ENCODE measurements at regions of chr16 and their contacts with region 1.

Region 1: DNA sequence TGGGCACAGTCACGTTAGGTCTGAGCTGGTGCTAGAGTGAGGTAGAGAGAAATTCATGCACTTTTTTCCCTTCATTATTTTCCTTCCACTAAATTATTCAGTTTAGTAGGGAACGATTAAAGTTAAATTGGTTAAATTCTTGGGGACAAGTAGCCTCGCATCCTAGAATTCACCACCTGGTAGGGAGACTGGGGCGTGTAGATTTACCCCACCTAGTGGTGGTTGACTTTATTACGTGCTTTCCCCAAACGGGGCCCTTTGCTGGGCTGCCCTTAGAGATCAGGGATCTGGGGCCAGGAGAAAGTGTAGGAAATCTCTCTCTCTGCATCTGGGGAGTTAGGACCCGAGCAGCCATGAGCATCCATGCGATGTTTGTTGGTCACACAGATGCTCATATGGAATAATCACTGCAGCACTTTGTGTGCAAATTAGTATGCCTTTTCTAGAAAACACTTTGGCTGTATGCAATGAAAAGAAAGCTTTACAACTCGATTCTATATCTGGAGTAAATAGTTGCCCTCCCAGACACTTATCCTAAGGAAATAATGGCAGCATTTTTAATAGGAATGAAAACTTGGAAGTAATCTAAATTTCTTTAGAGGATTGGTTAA is 107.0 kb downstream of the PLCG2 start:
- DNase-seq: peak; percentile 31
- ATAC-seq: peak; percentile 80
- H3K4me3 ChIP-seq: no peak overlapping the region
- H3K27ac ChIP-seq: no peak overlapping the region
- H3K4me1 ChIP-seq: peaks cover 34% of the 10 kb centered on the region
- H3K27me3 ChIP-seq: peaks cover 9 to 17% of the 10 kb centered on the region in 2 experiments; a peak in 2 of 5 replicates
- CTCF ChIP-seq: peak; percentile 68
- EP300 ChIP-seq: no peak
- POLR2A ChIP-seq: no peak
- RAD21 ChIP-seq: no peak

Region 2: DNA sequence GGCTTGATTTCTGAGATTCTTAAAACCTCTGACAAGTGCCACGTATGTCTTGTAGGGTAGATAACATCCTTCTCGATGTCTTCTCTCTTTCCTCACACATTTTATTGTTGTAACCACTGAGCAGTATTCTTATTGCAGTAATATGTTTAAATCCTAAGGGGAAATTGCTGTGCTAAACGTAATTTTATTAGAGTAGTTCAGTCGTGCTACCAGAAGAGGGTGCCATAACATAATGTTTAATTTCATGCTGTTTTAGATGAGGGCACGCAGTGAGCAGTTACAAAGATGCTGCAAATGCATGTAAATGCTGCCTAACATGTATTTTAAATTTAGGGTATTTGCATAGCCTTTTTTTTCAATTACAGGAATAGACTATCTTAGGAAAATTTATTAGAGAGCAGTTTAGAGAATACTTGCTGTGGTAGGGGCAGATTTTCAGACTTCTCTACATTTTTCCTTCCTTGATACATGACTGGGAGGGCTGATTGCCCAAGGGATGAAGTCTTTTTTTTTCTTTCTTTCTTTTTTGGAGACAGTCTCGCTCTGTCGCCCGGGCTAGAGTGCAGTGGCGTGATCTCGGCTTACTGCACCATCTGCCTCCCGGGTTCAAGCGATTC is 519.7 kb before region 1 on chr16:
- CTCF ChIA-PET with region 1: no interaction called
- POLR2A ChIA-PET with region 1: no interaction called
- in situ Hi-C with region 1: no loop called
- intact Hi-C with region 1: loop called (anchors 5 kb)
- DNase-seq: peak; percentile 38
- ATAC-seq: peak; percentile 72
- H3K4me3 ChIP-seq: no peak overlapping the region
- H3K27ac ChIP-seq: no peak overlapping the region
- H3K4me1 ChIP-seq: no peaks in the 10 kb centered on the region
- H3K27me3 ChIP-seq: no peaks in the 10 kb centered on the region
- CTCF ChIP-seq: peak; percentile 71
- EP300 ChIP-seq: no peak
- POLR2A ChIP-seq: no peak
- RAD21 ChIP-seq: peak; percentile 67

Region 3: GRCh38 chr16:81996664-81997622 is 110.9 kb after region 1 on chr16:
- CTCF ChIA-PET with region 1: interaction called, 6 read pairs
- POLR2A ChIA-PET with region 1: no interaction called
- in situ Hi-C with region 1: no loop called
- intact Hi-C with region 1: loop called (anchors 1 kb)
- DNase-seq: peak; percentile 52
- ATAC-seq: peak; percentile 88
- H3K4me3 ChIP-seq: no peak overlapping the region
- H3K27ac ChIP-seq: no peak overlapping the region
- H3K4me1 ChIP-seq: peaks cover 14% of the 10 kb centered on the region
- H3K27me3 ChIP-seq: peaks cover 0 to 4% of the 10 kb centered on the region in 2 experiments; a peak in 2 of 5 replicates
- CTCF ChIP-seq: peak; percentile 39
- EP300 ChIP-seq: no peak
- POLR2A ChIP-seq: no peak
- RAD21 ChIP-seq: no peak

Region 4: GRCh38 chr16:82229796-82230619 is 343.9 kb after region 1 on chr16:
- CTCF ChIA-PET with region 1: interaction called, 21 read pairs
- POLR2A ChIA-PET with region 1: no interaction called
- in situ Hi-C with region 1: no loop called
- intact Hi-C with region 1: loop called (anchors 1 kb)
- DNase-seq: peak; percentile 75
- ATAC-seq: peak; percentile 94
- H3K4me3 ChIP-seq: no peak overlapping the region
- H3K27ac ChIP-seq: no peak overlapping the region
- H3K4me1 ChIP-seq: no peaks in the 10 kb centered on the region
- H3K27me3 ChIP-seq: no peaks in the 10 kb centered on the region
- CTCF ChIP-seq: peak; percentile 94
- EP300 ChIP-seq: no peak
- POLR2A ChIP-seq: no peak
- RAD21 ChIP-seq: peak; percentile 90